ENCODE measurements at regions of chr2 and their contacts with region 1.

Region 1: DNA sequence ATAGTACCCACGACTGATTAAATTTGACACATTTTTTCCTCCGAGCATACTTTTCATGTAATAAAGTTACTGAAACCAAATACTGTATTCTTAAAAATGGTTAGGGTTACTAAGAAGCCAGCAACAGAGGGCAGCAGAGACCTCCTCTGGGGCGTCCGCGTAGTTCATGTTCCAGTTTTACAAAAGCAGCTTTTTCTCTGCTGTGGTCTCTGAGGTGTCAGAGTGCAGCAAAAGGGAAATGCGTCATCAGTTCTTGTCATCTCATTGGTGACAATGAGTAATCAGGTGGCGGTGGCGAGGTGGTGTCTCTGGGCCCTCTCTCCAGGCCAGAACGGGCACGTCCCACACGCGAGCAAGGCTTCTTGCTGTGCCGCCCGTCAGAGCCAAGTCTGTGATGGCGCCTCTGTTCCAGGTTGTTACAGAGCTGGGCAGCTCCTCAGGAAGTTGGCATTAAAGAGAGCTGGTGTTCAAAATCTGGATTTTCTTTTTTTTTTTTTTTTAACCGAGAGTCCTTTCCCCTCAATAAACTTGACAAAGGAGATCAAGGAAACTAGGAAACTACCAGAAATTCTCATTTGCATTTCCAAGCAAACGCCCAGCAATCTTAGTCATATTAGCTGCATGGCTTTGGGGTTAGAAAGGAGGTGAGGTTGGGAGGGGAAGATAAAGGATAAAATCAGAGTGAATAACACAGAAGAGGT is 98.6 kb upstream of the BZW1 start:
- DNase-seq: peak; percentile 92
- ATAC-seq: peak; percentile 97 to 99
- H3K4me3 ChIP-seq: peak overlapping the region; percentile 51
- H3K27ac ChIP-seq: peak overlapping the region; percentile 76
- H3K4me1 ChIP-seq: no peaks in the 10 kb centered on the region
- H3K27me3 ChIP-seq: no peaks in the 10 kb centered on the region

Region 2: DNA sequence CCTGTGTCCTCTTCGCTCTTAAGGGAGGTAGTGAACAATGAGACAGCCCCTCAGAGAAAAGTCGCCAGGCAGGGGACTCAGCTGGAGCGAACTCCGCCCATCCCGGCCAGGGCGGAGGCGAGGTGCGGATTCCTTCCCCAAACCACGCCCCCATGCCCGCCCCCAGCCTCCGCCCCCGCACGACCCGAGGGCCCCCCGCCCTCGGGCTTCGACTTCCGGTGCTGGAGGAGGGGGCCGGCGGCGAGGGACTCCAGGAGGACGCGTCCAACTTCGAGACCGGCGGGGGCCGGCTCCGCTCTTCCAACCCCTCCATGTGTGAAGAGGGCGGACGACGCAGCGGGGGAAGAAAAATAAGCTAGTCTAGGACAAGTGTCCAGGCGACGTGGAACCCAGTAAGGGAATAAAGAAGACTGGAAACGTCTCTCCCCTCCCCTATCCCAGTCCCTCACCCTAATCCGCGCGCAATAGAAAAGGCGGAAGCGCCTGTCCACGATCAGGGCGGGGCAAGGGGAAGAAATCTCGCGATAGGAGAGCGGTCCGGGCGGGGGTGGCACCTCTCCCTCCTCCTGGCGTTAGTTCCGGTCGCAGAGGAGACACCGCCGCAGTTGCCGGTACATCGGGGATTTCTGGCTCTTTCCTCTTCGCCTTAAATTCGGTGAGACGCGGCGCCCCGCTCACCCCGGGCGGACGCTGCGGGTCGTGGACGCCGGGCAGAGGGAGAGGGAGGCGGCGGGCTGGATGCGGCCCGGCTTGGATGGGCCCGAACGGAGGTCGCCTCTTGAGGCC is 98.4 kb after region 1 on chr2 and contains the start of gene BZW1:
- intact Hi-C with region 1: loop called in 2 of 4 experiments (anchors 1 to 5 kb)
- DNase-seq: peak; percentile 97 to 98 (median 97)
- ATAC-seq: peak; percentile 94 to 95
- H3K4me3 ChIP-seq: peak within 1 kb of the TSS; percentile 89
- H3K27ac ChIP-seq: peak within 1 kb of the TSS; percentile 98
- H3K4me1 ChIP-seq: peaks cover 3% of the 10 kb centered on the region
- H3K27me3 ChIP-seq: no peaks in the 10 kb centered on the region
- total RNA-seq, gene BZW1: 83.7 to 173 (median 100.0) TPM

Region 3: GRCh38 chr2:201059961-201060755 is 347.0 kb after region 1 on chr2:
- intact Hi-C with region 1: loop called in 1 of 4 experiments (anchors 10 kb)
- DNase-seq: no peak
- ATAC-seq: no peak
- H3K4me3 ChIP-seq: no peak overlapping the region
- H3K27ac ChIP-seq: no peak overlapping the region
- H3K4me1 ChIP-seq: peaks cover 3% of the 10 kb centered on the region
- H3K27me3 ChIP-seq: no peaks in the 10 kb centered on the region

Region 4: DNA sequence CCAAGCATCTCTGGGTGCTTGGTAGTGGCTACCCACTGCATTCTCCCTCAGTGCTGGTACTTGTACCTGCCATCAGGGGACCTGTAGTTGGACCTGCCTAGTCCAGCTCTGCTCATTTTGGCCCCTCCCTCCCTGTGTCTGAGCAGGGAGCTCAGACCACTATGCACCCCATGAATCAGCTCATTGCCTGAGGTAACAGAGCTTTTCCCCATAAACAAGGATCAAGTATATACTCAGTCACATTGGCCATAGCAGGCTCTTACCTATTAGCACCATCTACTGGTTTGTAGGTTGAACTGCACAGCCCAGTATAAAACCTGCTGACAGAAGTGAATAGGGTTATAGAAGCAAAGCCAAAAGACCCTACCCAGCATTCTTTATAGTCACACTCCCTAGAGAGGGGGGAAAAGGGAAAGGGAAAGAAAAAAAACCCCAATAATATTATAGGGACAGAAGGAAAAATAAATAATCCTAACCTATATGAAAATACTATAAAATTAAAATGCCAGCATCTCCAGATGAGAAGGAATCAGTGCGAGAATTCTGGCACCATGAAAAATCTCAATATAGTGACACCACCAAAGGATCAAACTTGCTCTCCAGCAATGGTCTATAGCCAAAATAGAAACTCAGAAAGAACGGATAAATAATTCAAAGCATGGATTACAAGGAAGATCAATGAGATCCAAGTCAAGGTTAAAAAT is 650.9 kb after region 1 on chr2:
- intact Hi-C with region 1: loop called in 1 of 4 experiments (anchors 10 kb)
- DNase-seq: no peak
- ATAC-seq: peak; percentile 69 to 72
- H3K4me3 ChIP-seq: no peak overlapping the region
- H3K27ac ChIP-seq: no peak overlapping the region
- H3K4me1 ChIP-seq: no peaks in the 10 kb centered on the region
- H3K27me3 ChIP-seq: no peaks in the 10 kb centered on the region